Ascending aorta (tissue), 2 donors: ENCODE measurements at regions of chr3 and their contacts with region 1.

Region 1: DNA sequence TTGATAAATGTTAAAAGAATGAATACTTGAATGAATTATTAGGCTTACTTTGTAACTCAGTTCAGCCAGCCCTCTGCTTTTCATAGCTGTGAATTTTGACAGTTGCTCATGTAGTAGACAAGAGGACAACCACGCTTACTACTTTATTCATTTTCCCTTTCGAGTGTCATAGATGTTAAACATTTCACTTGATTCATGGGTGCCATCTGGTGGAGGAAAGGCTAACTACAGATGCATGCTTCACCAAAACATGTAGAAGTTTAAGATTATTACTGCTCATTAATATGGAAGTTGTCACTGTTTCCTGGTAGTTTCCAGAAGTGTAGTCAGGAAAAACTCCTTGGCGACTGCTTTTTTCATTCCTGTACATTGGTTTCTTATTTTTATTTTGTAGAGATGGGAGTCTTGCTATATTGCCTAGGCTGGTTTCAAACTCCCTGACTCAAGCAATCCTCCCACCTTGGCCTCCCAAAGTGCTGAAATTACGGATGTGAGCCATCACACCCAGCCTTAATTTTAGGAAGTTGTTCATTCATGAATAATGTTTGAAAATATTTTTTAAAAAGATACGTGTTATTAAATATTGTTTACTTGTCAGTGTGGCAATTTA is 163.2 kb downstream of the B3GALNT1 start:
- DNase-seq: peak in 1 of 2 donors; percentile 87
- H3K4me3 ChIP-seq: no peak overlapping the region
- H3K27ac ChIP-seq: no peak overlapping the region
- H3K4me1 ChIP-seq: no peaks in the 10 kb centered on the region
- H3K27me3 ChIP-seq: no peaks in the 10 kb centered on the region
- CTCF ChIP-seq: peak; percentile 71 to 89 (median 86)

Region 2: DNA sequence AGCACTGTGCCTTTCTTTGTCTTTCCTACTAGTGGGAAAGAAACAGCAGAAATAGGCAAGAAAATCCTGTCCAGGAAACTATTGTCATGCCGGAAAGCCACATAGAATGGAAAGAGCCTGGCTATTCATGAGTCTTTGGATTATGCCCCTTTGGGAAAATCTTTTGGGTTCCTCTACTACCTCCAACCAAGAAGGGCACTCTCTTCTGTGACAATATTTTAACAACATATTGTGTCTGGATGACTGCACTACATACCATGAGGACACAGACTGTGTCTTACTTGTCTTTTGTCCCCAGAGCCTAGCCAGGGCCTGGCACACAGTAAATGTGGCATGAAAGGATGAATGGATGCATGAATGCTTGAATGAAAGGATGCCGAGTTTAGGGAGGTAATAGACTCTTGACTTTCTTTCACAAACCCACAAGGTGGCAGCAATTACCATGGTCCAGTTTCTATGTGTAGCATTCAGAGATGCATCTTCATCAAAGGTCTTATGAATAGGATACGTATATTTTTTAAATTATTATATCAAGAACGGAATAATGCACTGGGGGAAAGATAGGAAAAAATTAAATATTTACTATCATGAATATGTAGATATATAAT is 234.7 kb before region 1 on chr3:
- intact Hi-C with region 1: loop called (anchors 1 kb)
- DNase-seq: no peak
- H3K4me3 ChIP-seq: no peak overlapping the region
- H3K27ac ChIP-seq: no peak overlapping the region
- H3K4me1 ChIP-seq: no peaks in the 10 kb centered on the region
- H3K27me3 ChIP-seq: no peaks in the 10 kb centered on the region
- CTCF ChIP-seq: peak in 2 of 3 experiments; percentile 56 to 62

Region 3: GRCh38 chr3:160904691-160905090 is 37.3 kb before region 1 on chr3:
- intact Hi-C with region 1: no loop called
- DNase-seq: no peak
- H3K4me3 ChIP-seq: no peak overlapping the region
- H3K27ac ChIP-seq: no peak overlapping the region
- H3K4me1 ChIP-seq: no peaks in the 10 kb centered on the region
- H3K27me3 ChIP-seq: no peaks in the 10 kb centered on the region
- CTCF ChIP-seq: no peak